ENCODE measurements at regions of chr19 and their contacts with region 1.

Region 1: DNA sequence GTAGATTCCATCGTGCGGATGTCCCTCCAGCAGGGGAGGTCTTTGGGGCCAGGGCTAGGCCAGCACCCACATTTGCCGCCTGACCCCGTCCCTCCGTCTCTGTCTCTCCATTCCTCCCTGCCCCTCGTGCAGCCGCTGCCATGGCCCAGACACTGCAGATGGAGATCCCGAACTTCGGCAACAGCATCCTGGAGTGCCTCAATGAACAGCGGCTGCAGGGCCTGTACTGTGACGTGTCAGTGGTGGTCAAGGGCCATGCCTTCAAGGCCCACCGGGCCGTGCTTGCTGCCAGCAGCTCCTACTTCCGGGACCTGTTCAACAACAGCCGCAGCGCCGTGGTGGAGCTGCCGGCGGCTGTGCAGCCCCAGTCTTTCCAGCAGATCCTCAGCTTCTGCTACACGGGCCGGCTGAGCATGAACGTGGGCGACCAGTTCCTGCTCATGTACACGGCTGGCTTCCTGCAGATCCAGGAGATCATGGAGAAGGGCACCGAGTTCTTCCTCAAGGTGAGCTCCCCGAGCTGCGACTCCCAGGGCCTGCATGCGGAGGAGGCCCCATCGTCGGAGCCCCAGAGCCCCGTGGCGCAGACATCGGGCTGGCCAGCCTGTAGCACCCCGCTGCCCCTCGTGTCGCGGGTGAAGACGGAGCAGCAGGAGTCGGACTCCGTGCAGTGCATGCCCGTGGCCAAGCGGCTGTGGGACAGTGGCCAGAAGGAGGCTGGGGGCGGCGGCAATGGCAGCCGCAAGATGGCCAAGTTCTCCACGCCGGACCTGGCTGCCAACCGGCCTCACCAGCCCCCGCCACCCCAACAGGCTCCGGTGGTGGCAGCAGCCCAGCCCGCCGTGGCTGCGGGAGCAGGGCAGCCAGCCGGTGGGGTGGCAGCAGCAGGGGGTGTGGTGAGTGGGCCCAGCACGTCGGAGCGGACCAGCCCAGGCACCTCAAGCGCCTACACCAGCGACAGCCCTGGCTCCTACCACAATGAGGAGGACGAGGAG is 14.8 kb downstream of the STX10 start:
- DNase-seq: no peak
- H3K4me3 ChIP-seq: peak overlapping the region in 2 of 3 donors; percentile 30 to 39
- H3K27ac ChIP-seq: peak overlapping the region in 1 of 2 donors; percentile 23
- H3K4me1 ChIP-seq: no peaks in the 10 kb centered on the region
- H3K27me3 ChIP-seq: no peaks in the 10 kb centered on the region
- CTCF ChIP-seq: no peak
- POLR2A ChIP-seq: no peak

Region 2: GRCh38 chr19:13146763-13147563 is 11.6 kb after region 1 on chr19:
- intact Hi-C with region 1: loop called (anchors 1 kb)
- DNase-seq: no peak
- H3K4me3 ChIP-seq: no peak overlapping the region
- H3K27ac ChIP-seq: no peak overlapping the region
- H3K4me1 ChIP-seq: peaks cover 0 to 5% of the 10 kb centered on the region in 2 donors
- H3K27me3 ChIP-seq: no peaks in the 10 kb centered on the region
- CTCF ChIP-seq: no peak
- POLR2A ChIP-seq: no peak

Region 3: GRCh38 chr19:13160557-13160956 is 25.2 kb after region 1 on chr19:
- intact Hi-C with region 1: no loop called
- DNase-seq: no peak
- H3K4me3 ChIP-seq: no peak overlapping the region
- H3K27ac ChIP-seq: peak overlapping the region in 1 of 2 donors; percentile 99
- H3K4me1 ChIP-seq: peaks cover 10 to 28% of the 10 kb centered on the region in 2 donors
- H3K27me3 ChIP-seq: no peaks in the 10 kb centered on the region
- CTCF ChIP-seq: no peak
- POLR2A ChIP-seq: no peak